ENCODE measurements at regions of chr14 and their contacts with region 1.

Region 1: DNA sequence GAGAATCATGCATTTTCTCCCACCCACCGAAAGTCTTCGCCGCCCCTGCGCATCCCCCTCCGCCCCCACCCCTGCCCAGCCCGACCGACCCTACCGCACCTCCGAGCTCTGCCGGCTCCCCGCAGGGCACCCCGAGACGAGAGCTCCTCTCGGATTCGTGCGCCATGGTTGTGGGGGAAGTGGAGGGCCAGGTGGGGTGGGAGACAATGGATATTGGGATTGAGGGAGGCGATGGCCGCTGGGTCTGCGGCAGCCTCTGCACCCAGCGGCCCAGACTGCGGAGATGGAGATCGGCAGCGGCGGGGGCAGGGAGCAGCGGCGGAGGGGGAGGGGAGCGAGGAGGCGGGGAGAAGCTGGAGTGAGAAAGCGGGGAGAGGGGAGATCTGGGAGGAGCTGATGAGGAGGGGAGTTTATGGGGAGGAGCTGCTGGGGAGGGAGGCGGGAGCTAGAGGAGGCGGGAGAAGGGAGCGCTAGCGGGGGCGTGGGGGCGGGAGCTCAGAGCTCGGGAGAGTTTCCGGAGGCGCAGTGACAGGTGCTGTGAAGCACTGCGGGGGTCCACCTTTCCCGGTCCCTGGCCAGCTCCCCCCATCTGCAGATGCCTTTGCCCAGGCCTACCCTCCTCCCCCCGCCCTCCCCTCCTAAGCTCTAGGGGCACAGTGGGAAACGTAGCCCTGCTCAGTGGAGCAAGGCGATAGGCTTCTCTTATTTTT is at the start of gene SALL2:
- DNase-seq: peak; percentile 93
- H3K4me3 ChIP-seq: peak within 1 kb of the TSS; percentile 75 to 77
- H3K27ac ChIP-seq: peak within 1 kb of the TSS in 1 of 2 experiments; percentile 82; a peak in 2 of 4 replicates
- H3K4me1 ChIP-seq: peaks cover 0 to 16% of the 10 kb centered on the region in 2 experiments; a peak in 1 of 4 replicates
- H3K27me3 ChIP-seq: peaks cover 6% of the 10 kb centered on the region; the same call in 1 of the 2 replicates
- CTCF ChIP-seq: no peak
- EP300 ChIP-seq: no peak
- RAD21 ChIP-seq: no peak
- polyA plus RNA-seq, gene SALL2: 7.5 and 9.1 TPM in 2 replicates

Region 2: DNA sequence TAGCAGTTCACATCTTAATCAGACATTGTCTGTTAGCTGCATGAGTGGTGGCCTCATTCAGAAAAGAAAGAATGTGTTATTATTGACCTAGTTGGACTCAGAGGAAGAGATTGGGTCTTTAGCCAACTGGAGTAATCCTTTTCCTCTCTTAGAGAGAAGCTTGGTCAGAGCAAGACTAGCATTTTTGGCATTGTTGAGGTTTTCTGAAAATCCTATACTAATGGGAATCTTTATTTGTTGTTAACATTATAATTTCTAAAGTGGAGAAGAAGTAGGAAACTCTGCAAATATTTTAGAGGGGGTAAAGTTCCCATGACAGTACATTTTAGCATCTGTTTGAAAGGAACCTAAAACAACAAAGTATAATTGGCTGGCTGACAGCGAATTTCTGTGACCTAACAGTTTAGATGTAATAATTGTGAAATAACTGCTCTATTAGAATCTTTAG is 39.5 kb before region 1 on chr14:
- CTCF ChIA-PET with region 1: no interaction called
- POLR2A ChIA-PET with region 1: no interaction called
- DNase-seq: no peak
- H3K4me3 ChIP-seq: no peak overlapping the region
- H3K27ac ChIP-seq: peak overlapping the region in 1 of 2 experiments; percentile 51; a peak in 2 of 4 replicates
- H3K4me1 ChIP-seq: no peaks in the 10 kb centered on the region
- H3K27me3 ChIP-seq: no peaks in the 10 kb centered on the region
- CTCF ChIP-seq: no peak
- EP300 ChIP-seq: no peak
- RAD21 ChIP-seq: no peak

Region 3: GRCh38 chr14:21557084-21557901 is 31.2 kb after region 1 on chr14:
- CTCF ChIA-PET with region 1: interaction called, 11 read pairs
- POLR2A ChIA-PET with region 1: no interaction called
- DNase-seq: peak; percentile 65
- H3K4me3 ChIP-seq: peak overlapping the region; percentile 32 to 57
- H3K27ac ChIP-seq: peak overlapping the region in 1 of 2 experiments; percentile 4; a peak in 1 of 4 replicates
- H3K4me1 ChIP-seq: no peaks in the 10 kb centered on the region; a peak in 1 of 4 replicates
- H3K27me3 ChIP-seq: no peaks in the 10 kb centered on the region
- CTCF ChIP-seq: peak; percentile 81
- EP300 ChIP-seq: no peak
- RAD21 ChIP-seq: peak; percentile 87

Region 4: DNA sequence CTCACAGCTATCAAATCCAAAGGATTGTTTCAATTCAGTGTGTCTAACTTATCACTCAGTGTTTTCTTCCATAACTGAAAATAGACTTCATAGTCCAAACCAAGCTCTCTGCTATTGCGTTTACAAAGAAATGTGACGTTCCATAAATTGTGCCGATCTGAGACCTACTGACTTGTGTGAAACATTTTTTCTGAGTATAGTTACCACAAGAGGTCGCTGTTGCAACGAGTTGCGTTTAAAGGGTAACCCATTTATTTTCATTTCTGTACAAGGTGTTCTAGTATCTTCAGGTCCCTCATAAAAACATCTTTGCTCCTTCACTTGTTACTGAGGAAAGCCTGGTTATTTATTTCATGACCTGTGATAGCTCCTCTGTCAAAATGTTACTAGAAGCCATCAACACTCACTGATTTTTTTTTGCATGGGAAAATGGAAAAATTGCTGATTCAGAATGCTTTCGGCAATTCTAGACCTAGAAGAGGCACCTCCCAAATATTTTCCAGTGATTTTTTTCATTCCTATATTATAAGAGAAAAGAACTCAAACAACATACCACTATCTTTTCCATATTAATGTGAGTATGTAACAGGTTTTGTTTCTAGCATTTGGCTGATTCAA is 208.4 kb after region 1 on chr14:
- CTCF ChIA-PET with region 1: no interaction called
- POLR2A ChIA-PET with region 1: no interaction called
- DNase-seq: peak; percentile 31
- H3K4me3 ChIP-seq: no peak overlapping the region
- H3K27ac ChIP-seq: no peak overlapping the region
- H3K4me1 ChIP-seq: no peaks in the 10 kb centered on the region; a peak in 1 of 4 replicates
- H3K27me3 ChIP-seq: peaks cover 7% of the 10 kb centered on the region; the same call in 1 of the 2 replicates
- CTCF ChIP-seq: peak; percentile 80
- EP300 ChIP-seq: no peak
- RAD21 ChIP-seq: no peak